Esophagus muscularis mucosa (tissue), 4 donors: ENCODE measurements at regions of chr5 and their contacts with region 1.

Region 1: GRCh38 chr5:81971712-81972495 is at the start of gene ATG10:
- DNase-seq: peak; percentile 97
- H3K4me3 ChIP-seq: peak within 1 kb of the TSS; percentile 70 to 87 (median 82)
- H3K27ac ChIP-seq: peak within 1 kb of the TSS; percentile 98 to 99 (median 98)
- H3K4me1 ChIP-seq: peaks cover 0 to 16% (median 12%) of the 10 kb centered on the region in 4 donors
- H3K27me3 ChIP-seq: no peaks in the 10 kb centered on the region
- CTCF ChIP-seq: no peak
- EP300 ChIP-seq: no peak
- POLR2A ChIP-seq: peak; percentile 91
- total RNA-seq, gene ATG10: 5.2 to 9.1 (median 7.3) TPM

Region 2: GRCh38 chr5:81779125-81779915 is 192.6 kb before region 1 on chr5:
- intact Hi-C with region 1: no loop called
- DNase-seq: no peak
- H3K4me3 ChIP-seq: peak overlapping the region; percentile 25 to 46 (median 36)
- H3K27ac ChIP-seq: peak overlapping the region; percentile 79 to 83 (median 80)
- H3K4me1 ChIP-seq: peaks cover 15 to 55% (median 35%) of the 10 kb centered on the region in 4 donors
- H3K27me3 ChIP-seq: no peaks in the 10 kb centered on the region
- CTCF ChIP-seq: no peak
- EP300 ChIP-seq: no peak
- POLR2A ChIP-seq: no peak

Region 3: GRCh38 chr5:81856948-81857928 is 114.7 kb before region 1 on chr5:
- intact Hi-C with region 1: loop called (anchors 5 kb)
- DNase-seq: no peak
- H3K4me3 ChIP-seq: peak overlapping the region; percentile 1 to 15 (median 8)
- H3K27ac ChIP-seq: peak overlapping the region; percentile 70 to 75 (median 70)
- H3K4me1 ChIP-seq: peaks cover 23 to 60% (median 50%) of the 10 kb centered on the region in 4 donors
- H3K27me3 ChIP-seq: no peaks in the 10 kb centered on the region
- CTCF ChIP-seq: peak in 1 of 3 experiments; percentile 51
- EP300 ChIP-seq: no peak
- POLR2A ChIP-seq: no peak